RWPE1 (cell line): ENCODE measurements at regions of chr11 and their contacts with region 1.

Region 1: DNA sequence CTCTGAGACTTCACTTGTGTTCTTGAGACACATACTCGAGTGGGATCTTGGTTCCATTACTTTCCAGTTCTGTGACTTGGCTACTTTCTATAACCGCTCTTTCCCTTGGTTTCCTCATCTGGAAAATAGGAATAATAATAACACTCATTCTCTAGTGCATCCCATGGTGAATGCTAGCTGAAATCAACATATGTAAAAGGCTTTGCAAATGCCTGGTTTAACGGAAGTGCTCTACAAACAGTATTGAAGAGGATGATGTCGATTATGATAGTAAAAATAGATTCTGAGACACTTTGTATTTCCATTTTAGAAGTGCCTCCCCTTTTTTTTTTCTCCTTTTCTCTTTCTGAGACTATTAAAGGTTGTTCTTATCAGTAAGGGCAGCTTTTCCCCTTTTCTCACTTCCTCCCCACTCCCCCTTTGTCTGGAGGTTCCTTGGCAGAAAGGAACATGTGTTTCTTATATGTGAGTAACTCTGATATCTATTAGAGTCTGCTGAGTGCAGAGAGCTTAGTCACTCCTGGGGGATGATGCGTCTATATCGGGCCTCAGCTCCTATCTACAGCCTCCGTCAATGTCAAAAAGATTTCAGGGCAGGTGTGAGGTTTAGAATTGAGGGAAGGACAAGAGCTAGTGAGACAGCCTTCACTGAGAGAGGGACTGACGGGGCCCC is 489.3 kb downstream of the NTM start:
- DNase-seq: no peak
- H3K27ac ChIP-seq: no peak overlapping the region
- CTCF ChIP-seq: no peak

Region 2: GRCh38 chr11:131658952-131659351 is 200.7 kb before region 1 on chr11:
- CTCF ChIA-PET with region 1: no interaction called
- POLR2A ChIA-PET with region 1: no interaction called
- DNase-seq: no peak
- H3K27ac ChIP-seq: no peak overlapping the region
- CTCF ChIP-seq: no peak

Region 3: DNA sequence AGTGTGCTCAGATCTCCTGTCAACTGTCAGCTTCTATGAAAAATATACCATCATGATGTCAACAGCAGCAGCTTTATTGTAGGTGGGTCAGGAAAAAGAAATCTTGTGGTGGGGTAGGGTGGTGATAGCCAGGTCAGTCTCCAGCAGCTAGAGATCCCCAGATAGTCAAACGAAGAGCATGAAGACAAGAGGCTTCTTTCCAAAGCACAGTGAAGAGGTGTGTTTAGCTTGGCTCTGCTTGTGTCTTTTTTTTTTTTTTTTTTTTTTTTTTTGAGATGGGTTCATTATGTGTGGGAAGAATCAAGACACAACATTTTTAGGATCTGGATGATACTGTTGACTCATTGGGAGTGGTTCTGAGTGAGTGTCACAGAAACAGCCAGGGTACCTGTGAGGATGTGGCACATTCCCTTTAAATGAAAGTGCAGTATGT is 586.2 kb after region 1 on chr11:
- CTCF ChIA-PET with region 1: interaction called, 12 read pairs
- POLR2A ChIA-PET with region 1: no interaction called
- DNase-seq: no peak
- H3K27ac ChIP-seq: no peak overlapping the region
- CTCF ChIP-seq: no peak